OCI-LY7 (cell line): ENCODE measurements at regions of chr2 and their contacts with region 1.

Region 1: DNA sequence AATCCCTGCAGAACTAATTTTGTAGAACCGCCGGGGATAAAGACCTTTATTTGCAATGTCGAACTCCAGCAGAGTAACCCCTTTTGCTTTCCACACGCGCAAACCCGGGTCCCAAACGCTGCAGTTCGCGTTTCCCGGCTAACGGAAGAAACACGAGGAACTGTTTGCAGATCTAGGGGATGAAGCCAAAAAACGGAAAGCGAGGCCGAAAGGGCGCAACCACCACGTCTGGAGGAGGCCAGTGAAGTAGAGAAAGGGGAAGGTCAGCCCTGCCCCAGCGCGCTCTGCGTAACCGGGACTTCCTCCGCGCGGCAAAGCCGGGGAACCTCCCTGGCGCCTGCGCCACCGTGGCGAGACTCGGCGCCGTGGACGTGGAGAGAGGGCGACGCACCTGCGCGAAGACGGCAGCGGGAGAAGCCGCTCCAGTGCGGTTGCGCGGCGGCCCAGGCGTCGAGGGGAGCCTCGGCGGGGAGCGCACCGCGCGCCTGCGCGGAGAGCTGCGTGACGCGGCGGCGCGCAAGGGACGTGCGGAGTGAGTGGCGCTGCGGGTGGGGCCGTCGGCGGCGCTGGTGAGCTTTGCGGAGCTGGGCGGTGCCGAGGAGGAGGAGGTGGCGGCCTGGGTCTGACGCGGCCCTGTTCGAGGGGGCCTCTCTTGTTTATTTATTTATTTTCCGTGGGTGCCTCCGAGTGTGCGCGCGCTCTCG is at the start of gene PPP1CB:
- DNase-seq: peak; percentile 93
- H3K4me3 ChIP-seq: peak within 1 kb of the TSS; percentile 91
- H3K27ac ChIP-seq: peak within 1 kb of the TSS; percentile 86
- H3K4me1 ChIP-seq: peaks cover 30% of the 10 kb centered on the region
- CTCF ChIP-seq: 0 out of 2 replicates have a peak, but pooled peaks have one; percentile 37
- total RNA-seq, gene PPP1CB: 48.5 and 67.5 TPM in 2 replicates

Region 2: GRCh38 chr2:27890146-27890923 is 861.1 kb before region 1 on chr2 and contains the starts of genes BABAM2 and RBKS:
- CTCF ChIA-PET with region 1: no interaction called
- POLR2A ChIA-PET with region 1: no interaction called
- intact Hi-C with region 1: loop called (anchors 10 kb)
- DNase-seq: peak; percentile 91
- H3K4me3 ChIP-seq: peak within 1 kb of the TSS; percentile 89
- H3K27ac ChIP-seq: peak within 1 kb of the TSS; percentile 74
- H3K4me1 ChIP-seq: peaks cover 36% of the 10 kb centered on the region
- CTCF ChIP-seq: no peak
- total RNA-seq, gene BABAM2: 13.4 and 19.7 TPM in 2 replicates
- total RNA-seq, gene RBKS: 0.88 and 1.1 TPM in 2 replicates

Region 3: GRCh38 chr2:28392297-28393113 is 358.9 kb before region 1 on chr2 and contains the start of gene FOSL2:
- CTCF ChIA-PET with region 1: no interaction called
- POLR2A ChIA-PET with region 1: no interaction called
- intact Hi-C with region 1: loop called (anchors 5 kb)
- DNase-seq: peak; percentile 84
- H3K4me3 ChIP-seq: peak within 1 kb of the TSS; percentile 74
- H3K27ac ChIP-seq: peak within 1 kb of the TSS; percentile 3
- H3K4me1 ChIP-seq: peaks cover 21% of the 10 kb centered on the region
- CTCF ChIP-seq: no peak
- total RNA-seq, gene FOSL2: 0.03 and 0.35 TPM in 2 replicates

Region 4: GRCh38 chr2:28566521-28567041 is 184.8 kb before region 1 on chr2:
- CTCF ChIA-PET with region 1: no interaction called
- POLR2A ChIA-PET with region 1: interaction called, 5 read pairs
- intact Hi-C with region 1: loop called (anchors 1 kb)
- DNase-seq: peak; percentile 88
- H3K4me3 ChIP-seq: peak overlapping the region; percentile 66
- H3K27ac ChIP-seq: no peak overlapping the region
- H3K4me1 ChIP-seq: peaks cover 7% of the 10 kb centered on the region
- CTCF ChIP-seq: peak; percentile 97

Region 5: GRCh38 chr2:28594289-28595108 is 156.9 kb before region 1 on chr2:
- CTCF ChIA-PET with region 1: interaction called, 5 read pairs
- POLR2A ChIA-PET with region 1: interaction called, 4 read pairs
- intact Hi-C with region 1: loop called (anchors 1 kb)
- DNase-seq: peak; percentile 79
- H3K4me3 ChIP-seq: no peak overlapping the region
- H3K27ac ChIP-seq: no peak overlapping the region
- H3K4me1 ChIP-seq: no peaks in the 10 kb centered on the region
- CTCF ChIP-seq: peak; percentile 89

Region 6: DNA sequence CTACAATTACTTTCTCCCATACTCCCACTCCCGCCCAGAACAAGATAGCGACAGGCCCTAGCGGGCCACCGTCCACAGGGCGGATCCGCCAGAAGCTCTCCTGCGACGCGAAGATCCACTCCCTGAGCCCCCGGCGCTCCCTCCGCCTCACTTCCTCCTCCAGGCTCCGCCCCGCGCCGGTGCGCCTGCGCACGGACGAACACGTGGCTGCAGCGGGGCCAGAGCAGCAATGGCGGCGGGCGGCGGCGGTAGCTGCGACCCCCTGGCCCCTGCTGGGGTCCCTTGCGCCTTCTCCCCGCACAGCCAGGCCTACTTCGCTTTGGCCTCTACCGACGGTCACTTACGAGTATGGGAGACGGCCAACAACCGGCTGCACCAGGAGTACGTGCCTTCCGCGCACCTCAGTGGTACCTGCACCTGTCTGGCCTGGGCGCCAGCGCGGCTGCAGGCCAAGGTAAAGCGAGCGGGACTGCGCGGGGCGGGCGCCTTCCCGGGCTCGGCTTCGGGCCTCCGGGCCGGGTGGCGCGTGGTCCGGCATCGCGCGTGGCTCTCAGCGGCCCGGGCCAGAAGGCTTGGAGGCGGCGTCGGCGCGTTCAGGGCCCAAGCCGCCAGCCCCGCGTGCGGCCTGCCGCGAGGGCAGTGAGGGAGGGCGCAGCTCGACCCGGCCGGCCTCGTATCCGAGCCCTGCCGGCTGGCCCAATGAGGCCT is 143.2 kb after region 1 on chr2 and contains the start of gene WDR43:
- CTCF ChIA-PET with region 1: no interaction called
- POLR2A ChIA-PET with region 1: interaction called, 6 read pairs
- intact Hi-C with region 1: loop called (anchors 5 kb)
- DNase-seq: peak; percentile 98
- H3K4me3 ChIP-seq: peak within 1 kb of the TSS; percentile 99
- H3K27ac ChIP-seq: peak within 1 kb of the TSS; percentile 61
- H3K4me1 ChIP-seq: peaks cover 35% of the 10 kb centered on the region
- CTCF ChIP-seq: no peak
- total RNA-seq, gene WDR43: 78.8 and 107 TPM in 2 replicates